ENCODE measurements at regions of chr15 and their contacts with region 1.

Region 1: GRCh38 chr15:88454867-88455810 is 12.0 kb downstream of the MRPL46 start:
- DNase-seq: peak; percentile 56 to 65
- H3K4me3 ChIP-seq: no peak overlapping the region
- H3K27ac ChIP-seq: no peak overlapping the region
- H3K4me1 ChIP-seq: no peaks in the 10 kb centered on the region; a peak in 1 of 7 replicates
- H3K27me3 ChIP-seq: no peaks in the 10 kb centered on the region; a peak in 1 of 7 replicates
- CTCF ChIP-seq: peak; percentile 77 to 98 (median 94)
- EP300 ChIP-seq: no peak
- POLR2A ChIP-seq: no peak
- RAD21 ChIP-seq: peak; percentile 81 to 84

Region 2: GRCh38 chr15:88274553-88275460 is 180.3 kb before region 1 on chr15:
- CTCF ChIA-PET with region 1: interaction called, 38 read pairs
- POLR2A ChIA-PET with region 1: no interaction called
- DNase-seq: peak; percentile 60 to 89
- H3K4me3 ChIP-seq: no peak overlapping the region
- H3K27ac ChIP-seq: no peak overlapping the region
- H3K4me1 ChIP-seq: no peaks in the 10 kb centered on the region
- H3K27me3 ChIP-seq: peaks cover 0 to 6% (median under 1%) of the 10 kb centered on the region in 4 experiments; a peak in 1 of 7 replicates
- CTCF ChIP-seq: peak; percentile 92 to 97 (median 94)
- EP300 ChIP-seq: no peak
- POLR2A ChIP-seq: no peak
- RAD21 ChIP-seq: peak; percentile 91 to 92

Region 3: GRCh38 chr15:88312941-88313579 is 142.1 kb before region 1 on chr15:
- CTCF ChIA-PET with region 1: interaction called, 10 read pairs
- POLR2A ChIA-PET with region 1: no interaction called
- DNase-seq: no peak
- H3K4me3 ChIP-seq: no peak overlapping the region
- H3K27ac ChIP-seq: no peak overlapping the region
- H3K4me1 ChIP-seq: no peaks in the 10 kb centered on the region
- H3K27me3 ChIP-seq: no peaks in the 10 kb centered on the region
- CTCF ChIP-seq: no peak
- EP300 ChIP-seq: no peak
- POLR2A ChIP-seq: no peak
- RAD21 ChIP-seq: no peak

Region 4: GRCh38 chr15:88337993-88338392 is 117.1 kb before region 1 on chr15:
- CTCF ChIA-PET with region 1: interaction called, 25 read pairs
- POLR2A ChIA-PET with region 1: interaction called, 3 read pairs
- DNase-seq: no peak
- H3K4me3 ChIP-seq: no peak overlapping the region
- H3K27ac ChIP-seq: no peak overlapping the region
- H3K4me1 ChIP-seq: no peaks in the 10 kb centered on the region; a peak in 1 of 7 replicates
- H3K27me3 ChIP-seq: no peaks in the 10 kb centered on the region; a peak in 1 of 7 replicates
- CTCF ChIP-seq: peak in 2 of 3 experiments; percentile 28 to 46; a peak in 2 of 4 replicates
- EP300 ChIP-seq: no peak
- POLR2A ChIP-seq: no peak
- RAD21 ChIP-seq: peak; percentile 2 to 34; a peak in 1 of 4 replicates

Region 5: GRCh38 chr15:88401996-88402656 is 53.0 kb before region 1 on chr15:
- CTCF ChIA-PET with region 1: interaction called, 19 read pairs
- POLR2A ChIA-PET with region 1: no interaction called
- DNase-seq: no peak
- H3K4me3 ChIP-seq: no peak overlapping the region
- H3K27ac ChIP-seq: no peak overlapping the region
- H3K4me1 ChIP-seq: peaks cover 4 to 13% (median 10%) of the 10 kb centered on the region in 4 experiments; a peak in 4 of 7 replicates
- H3K27me3 ChIP-seq: no peaks in the 10 kb centered on the region
- CTCF ChIP-seq: no peak
- EP300 ChIP-seq: no peak
- POLR2A ChIP-seq: no peak
- RAD21 ChIP-seq: no peak

Region 6: GRCh38 chr15:88440021-88440420 is 15.1 kb before region 1 on chr15:
- CTCF ChIA-PET with region 1: interaction called, 41 read pairs
- POLR2A ChIA-PET with region 1: interaction called, 3 read pairs
- DNase-seq: no peak
- H3K4me3 ChIP-seq: no peak overlapping the region
- H3K27ac ChIP-seq: no peak overlapping the region
- H3K4me1 ChIP-seq: peaks cover 0 to 3% (median 0%) of the 10 kb centered on the region in 4 experiments; a peak in 1 of 7 replicates
- H3K27me3 ChIP-seq: no peaks in the 10 kb centered on the region
- CTCF ChIP-seq: no peak
- EP300 ChIP-seq: no peak
- POLR2A ChIP-seq: no peak
- RAD21 ChIP-seq: no peak

Region 7: DNA sequence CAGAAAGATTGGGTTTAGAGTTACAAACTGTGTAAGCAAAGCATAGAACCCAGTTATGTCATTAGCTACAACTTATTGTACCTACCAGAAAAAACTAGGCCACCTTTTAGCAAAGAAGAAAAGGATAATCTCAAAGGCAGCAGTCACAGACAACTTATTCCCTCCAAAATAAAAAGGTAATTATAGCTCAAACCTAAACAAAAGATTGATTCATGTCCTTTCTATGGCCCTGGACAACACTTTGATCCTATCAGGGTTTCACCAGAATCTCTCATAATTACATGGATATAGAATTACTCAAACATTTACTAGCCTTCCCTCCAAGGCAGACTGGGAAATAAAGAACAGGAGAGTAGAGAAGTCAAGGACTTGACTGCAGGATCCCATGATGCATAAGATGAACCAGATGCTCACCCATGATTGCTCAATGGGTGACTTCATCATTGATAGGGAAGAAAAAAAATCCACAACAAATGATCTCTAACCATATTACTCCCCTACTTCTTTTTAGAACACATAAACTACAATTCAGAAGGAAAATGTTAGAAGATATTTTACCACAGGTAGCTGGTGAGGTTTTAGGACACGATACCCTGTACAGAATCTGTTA is 74.0 kb after region 1 on chr15:
- CTCF ChIA-PET with region 1: no interaction called
- POLR2A ChIA-PET with region 1: no interaction called
- DNase-seq: no peak
- H3K4me3 ChIP-seq: no peak overlapping the region
- H3K27ac ChIP-seq: no peak overlapping the region
- H3K4me1 ChIP-seq: no peaks in the 10 kb centered on the region
- H3K27me3 ChIP-seq: no peaks in the 10 kb centered on the region
- CTCF ChIP-seq: no peak
- EP300 ChIP-seq: no peak
- POLR2A ChIP-seq: no peak
- RAD21 ChIP-seq: no peak

Region 8: GRCh38 chr15:88542342-88542733 is 87.2 kb after region 1 on chr15:
- CTCF ChIA-PET with region 1: no interaction called
- POLR2A ChIA-PET with region 1: no interaction called
- DNase-seq: no peak
- H3K4me3 ChIP-seq: no peak overlapping the region
- H3K27ac ChIP-seq: no peak overlapping the region
- H3K4me1 ChIP-seq: peaks cover 0 to 9% (median 1%) of the 10 kb centered on the region in 4 experiments; a peak in 3 of 7 replicates
- H3K27me3 ChIP-seq: no peaks in the 10 kb centered on the region
- CTCF ChIP-seq: no peak
- EP300 ChIP-seq: no peak
- POLR2A ChIP-seq: no peak
- RAD21 ChIP-seq: no peak

Region 9: GRCh38 chr15:88894348-88894818 is 439.2 kb after region 1 on chr15:
- CTCF ChIA-PET with region 1: no interaction called
- POLR2A ChIA-PET with region 1: no interaction called
- DNase-seq: peak in 1 of 2 experiments; percentile 95
- H3K4me3 ChIP-seq: peak overlapping the region; percentile 40 to 84 (median 68)
- H3K27ac ChIP-seq: no peak overlapping the region
- H3K4me1 ChIP-seq: peaks cover 0 to 28% (median 20%) of the 10 kb centered on the region in 4 experiments; a peak in 6 of 7 replicates
- H3K27me3 ChIP-seq: no peaks in the 10 kb centered on the region
- CTCF ChIP-seq: peak; percentile 90 to 99 (median 98)
- EP300 ChIP-seq: no peak
- POLR2A ChIP-seq: peak in 1 of 2 experiments; percentile 52; a peak in 1 of 3 replicates
- RAD21 ChIP-seq: peak; percentile 90 to 92